ENCODE measurements at regions of chr15 and their contacts with region 1.

Region 1: DNA sequence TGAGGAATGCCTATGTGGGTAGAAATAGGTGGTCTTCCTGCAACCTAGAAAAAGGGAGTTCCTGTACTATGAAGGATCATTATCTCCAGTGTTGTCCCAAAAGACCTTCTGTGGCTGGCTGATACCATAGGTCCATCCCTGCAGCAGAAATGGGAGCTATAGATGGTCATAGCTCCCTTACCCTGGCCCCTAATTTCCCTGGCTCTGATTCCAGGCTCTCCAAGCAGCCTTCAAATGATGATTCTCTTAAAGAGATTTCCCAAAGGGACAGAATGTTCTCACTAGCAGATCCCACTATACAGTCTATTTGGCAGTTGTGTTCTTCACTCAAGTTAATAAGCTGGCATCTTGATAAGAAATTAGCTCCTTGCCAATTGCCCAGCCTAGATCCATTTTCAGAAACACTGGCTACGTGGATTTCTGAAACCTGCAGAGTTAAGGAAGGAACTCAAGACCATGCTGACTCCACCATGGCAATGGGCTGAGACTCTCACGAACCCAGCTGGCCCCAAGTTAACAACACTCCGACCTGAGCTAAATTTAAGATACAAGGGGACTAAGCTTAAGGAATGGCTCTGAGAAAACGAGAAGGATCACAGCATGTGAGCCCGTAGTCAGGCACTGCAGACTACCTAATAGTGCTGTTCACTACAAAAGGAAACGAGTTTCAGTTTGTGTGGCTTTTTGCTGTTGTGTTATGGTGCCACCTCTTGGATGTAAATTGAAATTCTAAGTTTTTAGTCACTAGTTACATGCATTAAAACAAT is 11.4 kb downstream of the C15orf40 start:
- DNase-seq: peak in 1 of 2 donors; percentile 74
- ATAC-seq: peak; percentile 81 to 91 (median 84)
- H3K4me3 ChIP-seq: no peak overlapping the region
- H3K4me3 Mint-ChIP-seq: peak overlapping the region; percentile 77
- H3K27ac ChIP-seq: peak overlapping the region; percentile 37
- H3K27ac Mint-ChIP-seq: peak overlapping the region; percentile 58 to 85
- H3K4me1 ChIP-seq: peaks cover 7% of the 10 kb centered on the region
- H3K4me1 Mint-ChIP-seq: peaks cover 7 to 8% of the 10 kb centered on the region in 2 donors
- H3K27me3 ChIP-seq: no peaks in the 10 kb centered on the region
- H3K27me3 Mint-ChIP-seq: no peaks in the 10 kb centered on the region
- CTCF ChIP-seq: peak; percentile 64

Region 2: DNA sequence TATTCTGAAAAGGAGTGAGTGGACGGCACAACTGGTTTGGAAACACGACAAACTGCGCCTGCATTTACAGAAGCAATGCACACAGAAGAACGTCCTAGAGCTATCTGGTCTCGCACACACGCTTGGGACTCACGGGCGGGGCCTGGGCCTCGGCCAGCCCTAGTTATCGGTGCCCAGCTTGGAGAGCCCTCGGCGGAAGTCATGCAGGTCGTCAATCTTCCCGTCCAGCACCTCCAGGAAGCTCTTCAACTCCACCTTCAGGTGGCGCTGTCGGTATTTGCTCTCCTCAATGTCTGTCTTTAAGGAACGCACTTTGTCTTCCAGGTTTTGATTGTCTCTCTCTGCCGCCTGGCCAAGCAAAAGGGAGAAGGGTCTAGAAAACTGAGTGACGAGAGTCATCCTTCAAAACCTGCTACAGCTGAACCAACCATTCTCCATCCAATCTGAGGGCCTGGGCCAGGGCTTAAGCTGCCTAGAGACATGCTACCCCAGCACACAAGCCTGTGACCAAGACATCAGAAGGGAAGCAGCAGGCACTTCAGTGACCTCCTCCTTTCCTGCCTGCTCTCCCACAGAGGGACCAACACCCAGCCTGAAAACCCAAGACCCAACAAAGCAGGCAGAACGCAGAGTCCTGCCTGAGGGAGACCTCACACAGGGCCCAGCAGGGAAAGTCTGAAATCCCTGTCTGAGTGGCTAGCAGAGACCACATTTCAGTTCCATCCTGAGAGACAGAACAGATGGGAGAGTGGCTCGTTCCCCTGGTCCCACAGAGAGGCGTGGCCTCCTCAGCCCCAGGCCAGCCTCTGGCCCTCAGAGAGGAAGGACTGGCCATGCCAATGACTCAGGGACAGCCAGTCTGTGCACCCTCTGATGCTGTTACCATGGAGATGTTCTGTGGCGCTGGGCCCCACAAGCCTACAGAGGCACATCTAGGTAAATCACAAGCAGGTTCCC is 150.3 kb before region 1 on chr15:
- intact Hi-C with region 1: loop called (anchors 1 kb)
- DNase-seq: peak; percentile 38 to 71
- ATAC-seq: peak; percentile 76 to 83 (median 79)
- H3K4me3 ChIP-seq: no peak overlapping the region
- H3K4me3 Mint-ChIP-seq: peak overlapping the region; percentile 6
- H3K27ac ChIP-seq: no peak overlapping the region
- H3K27ac Mint-ChIP-seq: peak overlapping the region; percentile 14 to 31
- H3K4me1 ChIP-seq: peaks cover 12% of the 10 kb centered on the region
- H3K4me1 Mint-ChIP-seq: peaks cover 14 to 16% of the 10 kb centered on the region in 2 donors
- H3K27me3 ChIP-seq: no peaks in the 10 kb centered on the region
- H3K27me3 Mint-ChIP-seq: no peaks in the 10 kb centered on the region
- CTCF ChIP-seq: peak; percentile 69

Region 3: GRCh38 chr15:82936960-82937711 is 63.0 kb before region 1 on chr15:
- intact Hi-C with region 1: no loop called
- DNase-seq: no peak
- ATAC-seq: no peak
- H3K4me3 ChIP-seq: no peak overlapping the region
- H3K4me3 Mint-ChIP-seq: no peak overlapping the region
- H3K27ac ChIP-seq: no peak overlapping the region
- H3K27ac Mint-ChIP-seq: no peak overlapping the region
- H3K4me1 ChIP-seq: no peaks in the 10 kb centered on the region
- H3K4me1 Mint-ChIP-seq: peaks cover 0 to 11% of the 10 kb centered on the region in 2 donors
- H3K27me3 ChIP-seq: no peaks in the 10 kb centered on the region
- H3K27me3 Mint-ChIP-seq: no peaks in the 10 kb centered on the region
- CTCF ChIP-seq: no peak

Region 4: GRCh38 chr15:82985688-82986441 is 14.2 kb before region 1 on chr15 and contains the start of gene RAMAC:
- intact Hi-C with region 1: loop called (anchors 2 kb)
- DNase-seq: peak; percentile 84 to 98
- ATAC-seq: peak; percentile 91 to 95 (median 94)
- H3K4me3 ChIP-seq: peak within 1 kb of the TSS; percentile 94
- H3K4me3 Mint-ChIP-seq: peak within 1 kb of the TSS; percentile 97
- H3K27ac ChIP-seq: peak within 1 kb of the TSS; percentile 72
- H3K27ac Mint-ChIP-seq: peak within 1 kb of the TSS; percentile 90 to 94
- H3K4me1 ChIP-seq: peaks cover 15% of the 10 kb centered on the region
- H3K4me1 Mint-ChIP-seq: peaks cover 22 to 30% of the 10 kb centered on the region in 2 donors
- H3K27me3 ChIP-seq: no peaks in the 10 kb centered on the region
- H3K27me3 Mint-ChIP-seq: no peaks in the 10 kb centered on the region
- CTCF ChIP-seq: no peak
- total RNA-seq, gene RAMAC: 15.4 to 27.2 (median 25.7) TPM

Region 5: DNA sequence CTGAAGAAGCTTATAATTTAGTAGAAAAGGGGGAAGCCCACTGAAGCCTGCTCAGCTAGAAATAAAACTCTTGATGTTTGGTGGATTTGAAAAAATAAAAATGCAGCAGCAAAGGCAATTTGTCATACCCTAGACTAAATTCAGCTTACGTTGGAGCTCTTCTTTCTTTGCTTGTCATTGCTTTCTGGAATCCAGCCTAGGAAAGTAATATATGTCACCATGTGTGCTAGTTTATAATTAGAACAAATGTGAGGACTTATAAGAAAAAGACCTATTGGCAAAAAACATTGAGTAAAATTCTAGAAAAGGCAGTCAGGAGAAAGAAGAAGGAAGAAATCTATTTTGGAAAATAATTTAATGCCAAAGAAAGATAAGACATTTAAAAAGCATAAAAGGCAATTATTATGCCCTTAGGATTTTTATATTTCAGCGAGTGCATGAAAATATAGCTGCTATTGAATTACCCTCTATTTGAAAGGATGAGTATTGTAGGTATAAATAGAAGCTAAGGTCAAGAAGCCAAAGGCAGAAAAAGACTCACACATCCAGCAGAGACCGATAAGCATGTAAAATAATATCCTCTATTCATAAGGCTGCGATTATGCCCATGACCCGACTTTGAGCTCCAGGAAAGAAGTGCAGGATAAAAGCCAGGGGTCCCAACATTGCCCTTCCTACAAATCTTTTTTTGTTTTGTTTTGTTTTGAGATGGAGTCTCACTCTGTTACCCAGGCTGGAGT is 77.6 kb after region 1 on chr15:
- intact Hi-C with region 1: no loop called
- DNase-seq: no peak
- ATAC-seq: no peak
- H3K4me3 ChIP-seq: no peak overlapping the region
- H3K4me3 Mint-ChIP-seq: no peak overlapping the region
- H3K27ac ChIP-seq: no peak overlapping the region
- H3K27ac Mint-ChIP-seq: no peak overlapping the region
- H3K4me1 ChIP-seq: no peaks in the 10 kb centered on the region
- H3K4me1 Mint-ChIP-seq: peaks cover 0 to 8% of the 10 kb centered on the region in 2 donors
- H3K27me3 ChIP-seq: peaks cover 2% of the 10 kb centered on the region
- H3K27me3 Mint-ChIP-seq: peaks cover 24 to 37% of the 10 kb centered on the region in 2 donors
- CTCF ChIP-seq: no peak